ENCODE measurements at regions of chr20 and their contacts with region 1.

Region 1: DNA sequence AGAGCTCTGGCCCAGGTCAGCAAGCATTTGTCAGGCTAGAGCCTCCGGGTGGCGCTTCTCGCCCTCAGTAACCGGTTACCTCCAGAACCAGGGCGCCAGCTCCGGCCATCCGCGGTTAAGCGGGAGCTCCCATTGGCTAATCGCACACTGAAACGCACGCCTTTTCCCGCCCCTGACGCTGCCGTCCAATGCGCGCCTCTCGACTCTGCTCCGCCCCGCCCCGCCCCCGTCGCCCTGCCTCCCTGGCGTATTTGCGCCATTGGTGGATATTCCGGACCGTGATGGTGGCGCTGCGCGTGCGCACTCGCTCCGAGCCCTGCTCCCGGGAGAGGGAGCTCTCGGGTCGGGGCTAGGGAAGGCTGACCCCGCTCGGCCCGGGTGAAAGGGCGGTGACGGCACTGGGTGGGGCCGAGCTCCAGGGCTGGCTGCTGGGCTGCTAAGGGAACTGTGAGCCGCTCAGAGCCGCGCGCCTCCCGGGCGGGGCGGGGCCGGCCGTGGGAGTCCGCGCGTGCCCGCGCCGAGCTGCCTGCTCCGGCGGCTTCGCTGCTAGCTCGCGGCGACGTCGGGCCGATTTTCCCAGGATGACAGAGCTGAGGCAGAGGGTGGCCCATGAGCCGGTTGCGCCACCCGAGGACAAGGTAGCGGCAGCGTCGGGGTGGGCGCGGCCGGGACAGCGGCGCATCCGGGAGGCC is at the start of gene CDS2:
- DNase-seq: peak; percentile 100
- H3K4me3 ChIP-seq: peak within 1 kb of the TSS; percentile 70 to 98 (median 85)
- H3K27ac ChIP-seq: peak within 1 kb of the TSS; percentile 95 to 99 (median 98)
- H3K4me1 ChIP-seq: peaks cover 10 to 30% (median 25%) of the 10 kb centered on the region in 4 donors
- H3K27me3 ChIP-seq: no peaks in the 10 kb centered on the region
- CTCF ChIP-seq: peak; percentile 37 to 68 (median 52)
- EP300 ChIP-seq: no peak
- POLR2A ChIP-seq: peak; percentile 76
- total RNA-seq, gene CDS2: 26.9 to 60.1 (median 30.3) TPM

Region 2: GRCh38 chr20:4726710-4727397 is 399.8 kb before region 1 on chr20:
- in situ Hi-C with region 1: no loop called
- intact Hi-C with region 1: no loop called
- DNase-seq: peak; percentile 20
- H3K4me3 ChIP-seq: peak overlapping the region in 1 of 4 donors; percentile 17
- H3K27ac ChIP-seq: peak overlapping the region in 2 of 4 donors; percentile 6 to 33
- H3K4me1 ChIP-seq: peaks cover 0 to 5% (median 0%) of the 10 kb centered on the region in 4 donors
- H3K27me3 ChIP-seq: no peaks in the 10 kb centered on the region
- CTCF ChIP-seq: no peak
- EP300 ChIP-seq: no peak
- POLR2A ChIP-seq: no peak

Region 3: GRCh38 chr20:5181956-5182355 is 55.3 kb after region 1 on chr20:
- in situ Hi-C with region 1: loop called (anchors 5 to 10 kb)
- intact Hi-C with region 1: no loop called
- DNase-seq: no peak
- H3K4me3 ChIP-seq: no peak overlapping the region
- H3K27ac ChIP-seq: peak overlapping the region; percentile 23 to 38 (median 36)
- H3K4me1 ChIP-seq: peaks cover 0 to 11% (median 2%) of the 10 kb centered on the region in 4 donors
- H3K27me3 ChIP-seq: no peaks in the 10 kb centered on the region
- CTCF ChIP-seq: no peak
- EP300 ChIP-seq: no peak
- POLR2A ChIP-seq: no peak

Region 4: GRCh38 chr20:5187122-5187521 is 60.5 kb after region 1 on chr20:
- in situ Hi-C with region 1: loop called (anchors 5 to 10 kb)
- intact Hi-C with region 1: no loop called
- DNase-seq: no peak
- H3K4me3 ChIP-seq: no peak overlapping the region
- H3K27ac ChIP-seq: no peak overlapping the region
- H3K4me1 ChIP-seq: peaks cover 2 to 6% (median 4%) of the 10 kb centered on the region in 4 donors
- H3K27me3 ChIP-seq: no peaks in the 10 kb centered on the region
- CTCF ChIP-seq: no peak
- EP300 ChIP-seq: no peak
- POLR2A ChIP-seq: no peak

Region 5: GRCh38 chr20:5195655-5196054 is 69.0 kb after region 1 on chr20:
- in situ Hi-C with region 1: no loop called
- intact Hi-C with region 1: loop called (anchors 5 kb)
- DNase-seq: no peak
- H3K4me3 ChIP-seq: no peak overlapping the region
- H3K27ac ChIP-seq: no peak overlapping the region
- H3K4me1 ChIP-seq: peaks cover 3 to 12% (median 6%) of the 10 kb centered on the region in 4 donors
- H3K27me3 ChIP-seq: no peaks in the 10 kb centered on the region
- CTCF ChIP-seq: no peak
- EP300 ChIP-seq: no peak
- POLR2A ChIP-seq: no peak

Region 6: DNA sequence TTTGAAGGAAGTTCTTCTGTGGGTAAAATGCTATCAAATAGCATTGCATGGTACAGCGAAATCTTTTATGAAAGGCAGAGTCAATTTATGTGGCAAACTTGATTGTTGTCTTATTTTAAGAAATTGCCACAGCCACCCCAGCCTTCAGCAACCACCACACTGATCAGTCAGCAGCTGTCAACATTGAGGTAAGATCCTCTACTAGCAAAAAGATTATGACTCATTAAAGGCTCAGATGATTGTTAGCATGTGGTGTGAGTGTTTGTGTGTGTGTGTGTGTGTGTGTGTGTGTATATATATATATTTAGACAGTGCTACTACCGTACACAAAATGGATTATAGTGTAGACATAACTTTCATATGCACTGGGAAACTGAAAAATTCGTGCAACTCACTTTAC is 899.4 kb after region 1 on chr20:
- in situ Hi-C with region 1: no loop called
- intact Hi-C with region 1: no loop called
- DNase-seq: no peak
- H3K4me3 ChIP-seq: no peak overlapping the region
- H3K27ac ChIP-seq: no peak overlapping the region
- H3K4me1 ChIP-seq: no peaks in the 10 kb centered on the region
- H3K27me3 ChIP-seq: no peaks in the 10 kb centered on the region
- CTCF ChIP-seq: no peak
- EP300 ChIP-seq: no peak
- POLR2A ChIP-seq: no peak